ENCODE measurements at regions of chr5 and their contacts with region 1.

Region 1: DNA sequence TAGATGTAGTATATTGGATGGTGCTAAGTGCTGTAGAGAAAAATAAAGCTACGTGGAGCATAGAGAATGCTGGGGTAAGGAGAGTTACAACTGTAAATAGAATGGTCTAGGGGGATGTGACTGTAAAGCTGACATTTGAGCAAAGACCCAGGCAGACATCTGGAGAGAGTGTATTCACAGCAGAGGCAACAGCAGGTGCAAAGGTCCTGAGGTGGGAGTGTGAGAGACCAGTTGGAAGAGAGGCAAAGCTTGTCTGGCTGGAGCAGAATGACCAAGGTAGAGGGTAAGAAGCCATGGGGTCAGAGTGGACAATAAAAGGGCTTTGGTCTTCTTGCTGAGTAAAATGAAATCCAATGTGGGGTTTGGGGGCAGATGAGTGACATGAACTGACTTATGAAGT is 92.9 kb upstream of the IQGAP2 start:
- DNase-seq: no peak
- H3K4me3 ChIP-seq: no peak overlapping the region
- H3K27ac ChIP-seq: no peak overlapping the region
- H3K4me1 ChIP-seq: no peaks in the 10 kb centered on the region
- H3K27me3 ChIP-seq: peaks cover 0 to 2% of the 10 kb centered on the region in 2 experiments
- CTCF ChIP-seq: no peak
- POLR2A ChIP-seq: no peak

Region 2: DNA sequence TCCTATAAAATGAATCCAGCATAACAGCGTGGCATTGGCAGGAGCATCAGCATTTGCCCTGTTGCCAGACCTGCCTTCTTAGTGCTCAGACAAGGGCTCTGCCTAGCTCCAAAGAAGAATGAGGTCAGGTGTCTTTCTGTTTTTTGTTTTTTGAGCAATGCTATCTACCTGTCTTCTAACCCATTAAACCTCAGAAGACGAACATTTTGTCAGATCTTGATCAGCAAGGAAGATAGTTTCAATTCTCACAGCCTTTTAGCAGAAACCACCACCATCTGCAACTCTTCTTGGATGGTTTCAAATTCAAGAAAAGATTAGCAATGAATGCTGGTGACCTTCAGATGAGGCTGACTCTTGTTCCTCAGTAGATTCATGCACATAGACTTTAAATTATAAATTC is 10.6 kb before region 1 on chr5:
- CTCF ChIA-PET with region 1: interaction called, 12 read pairs
- POLR2A ChIA-PET with region 1: no interaction called
- dilution Hi-C with region 1: no loop called
- intact Hi-C with region 1: no loop called
- DNase-seq: no peak
- H3K4me3 ChIP-seq: no peak overlapping the region
- H3K27ac ChIP-seq: no peak overlapping the region
- H3K4me1 ChIP-seq: no peaks in the 10 kb centered on the region
- H3K27me3 ChIP-seq: peaks cover 0 to 2% of the 10 kb centered on the region in 2 experiments
- CTCF ChIP-seq: no peak
- POLR2A ChIP-seq: no peak

Measured in endothelial cell of umbilical vein (primary cell).